ENCODE measurements at regions of chr10 and their contacts with region 1.

Region 1: GRCh38 chr10:88165849-88166271 is 302.4 kb downstream of the PTEN start:
- DNase-seq: no peak
- ATAC-seq: peak in 1 of 2 donors; percentile 11

Region 2: DNA sequence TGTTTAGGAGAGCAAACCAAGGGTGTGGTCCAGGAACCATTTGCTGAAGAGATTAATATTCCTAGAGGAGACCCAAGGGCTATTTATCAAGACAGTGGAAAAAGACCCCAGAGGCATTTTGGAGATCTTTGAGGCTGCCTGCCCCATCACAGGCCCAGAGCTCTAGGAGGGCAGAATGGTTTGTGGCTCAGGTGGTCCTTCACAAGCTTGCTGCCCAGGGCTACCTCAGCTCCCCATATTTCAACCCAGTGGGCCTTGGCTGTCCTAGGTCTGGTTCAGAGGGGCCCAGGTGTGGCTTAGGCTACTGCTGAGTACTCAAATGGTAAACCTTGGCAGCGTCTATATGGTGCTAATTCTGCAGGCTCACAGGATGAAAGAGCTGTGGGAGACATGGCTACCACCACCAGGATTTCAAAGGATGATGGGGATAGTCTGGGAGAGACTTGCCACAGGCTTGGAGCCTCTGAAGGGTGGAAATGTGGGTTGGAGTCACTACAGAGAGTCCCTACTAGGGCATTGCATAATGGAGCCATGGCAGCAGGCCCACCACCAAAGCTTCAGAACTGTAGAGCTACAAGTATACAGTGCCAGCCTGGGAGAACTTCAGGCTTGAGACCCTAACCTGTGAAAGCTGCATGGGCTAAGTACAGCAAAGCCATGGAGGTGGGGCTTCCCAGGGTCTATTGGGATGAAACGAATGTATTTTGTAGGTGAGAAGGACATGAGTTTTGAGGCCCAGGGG is 278.1 kb before region 1 on chr10:
- intact Hi-C with region 1: no loop called
- DNase-seq: no peak
- ATAC-seq: no peak

Region 3: GRCh38 chr10:88227342-88228018 is 61.6 kb after region 1 on chr10:
- intact Hi-C with region 1: loop called in 1 of 2 experiments (anchors 10 kb)
- DNase-seq: peak; percentile 53
- ATAC-seq: peak; percentile 78 to 79

Region 4: DNA sequence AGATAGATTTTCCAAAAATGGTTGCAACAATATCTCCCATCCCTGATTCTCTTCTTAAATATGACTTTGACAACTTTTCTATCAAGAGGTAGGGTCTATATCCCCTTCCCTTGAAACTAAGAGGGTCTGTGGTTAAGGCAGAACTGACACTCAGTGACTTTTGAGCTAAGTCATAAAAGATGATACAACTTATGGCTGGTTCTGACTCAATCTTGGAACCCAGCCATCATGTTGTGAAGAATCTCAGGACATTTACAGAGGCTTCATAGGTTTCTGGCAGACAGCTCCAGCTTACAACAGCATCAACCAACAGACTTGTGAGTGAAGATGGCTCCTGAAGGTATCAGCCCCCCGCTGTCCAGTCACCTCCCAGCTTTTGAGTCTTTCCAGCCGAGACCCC is 213.7 kb after region 1 on chr10:
- intact Hi-C with region 1: loop called in 1 of 2 experiments (anchors 10 kb)
- DNase-seq: no peak
- ATAC-seq: peak in 1 of 2 donors; percentile 41